HCT116 (cell line): ENCODE measurements at regions of chr2 and their contacts with region 1.

Region 1: GRCh38 chr2:112958428-112959108 is 19.2 kb upstream of the IL36G start:
- DNase-seq: peak; percentile 41
- ATAC-seq: peak; percentile 95
- H3K4me3 ChIP-seq: no peak overlapping the region
- H3K27ac ChIP-seq: no peak overlapping the region
- H3K4me1 ChIP-seq: peaks cover 0 to 13% of the 10 kb centered on the region in 2 experiments; a peak in 1 of 4 replicates
- H3K27me3 ChIP-seq: no peaks in the 10 kb centered on the region
- CTCF ChIP-seq: peak; percentile 62 to 92 (median 89); a peak in 5 of 6 replicates
- POLR2A ChIP-seq: no peak
- RAD21 ChIP-seq: peak; percentile 65

Region 2: GRCh38 chr2:112749755-112750559 is 208.6 kb before region 1 on chr2:
- CTCF ChIA-PET with region 1: interaction called, 7 read pairs
- POLR2A ChIA-PET with region 1: no interaction called
- RAD21 ChIA-PET with region 1: interaction called in 1 of 2 experiments, 4 read pairs
- intact Hi-C with region 1: loop called (anchors 2 kb)
- DNase-seq: no peak
- ATAC-seq: peak; percentile 94
- H3K4me3 ChIP-seq: no peak overlapping the region
- H3K27ac ChIP-seq: no peak overlapping the region
- H3K4me1 ChIP-seq: no peaks in the 10 kb centered on the region
- H3K27me3 ChIP-seq: no peaks in the 10 kb centered on the region
- CTCF ChIP-seq: peak; percentile 83 to 96 (median 92)
- POLR2A ChIP-seq: no peak
- RAD21 ChIP-seq: peak; percentile 81

Region 3: GRCh38 chr2:112947374-112947773 is 11.2 kb before region 1 on chr2:
- CTCF ChIA-PET with region 1: interaction called, 26 read pairs
- POLR2A ChIA-PET with region 1: no interaction called
- RAD21 ChIA-PET with region 1: no interaction called
- intact Hi-C with region 1: no loop called
- DNase-seq: no peak
- ATAC-seq: no peak
- H3K4me3 ChIP-seq: no peak overlapping the region
- H3K27ac ChIP-seq: no peak overlapping the region
- H3K4me1 ChIP-seq: 0 out of 4 replicates have a peak, but pooled peaks cover 0 to 2% of the 10 kb centered on the region in 2 experiments
- H3K27me3 ChIP-seq: no peaks in the 10 kb centered on the region
- CTCF ChIP-seq: no peak
- POLR2A ChIP-seq: no peak
- RAD21 ChIP-seq: no peak

Region 4: GRCh38 chr2:113407446-113408099 is 449.0 kb after region 1 on chr2:
- CTCF ChIA-PET with region 1: no interaction called
- POLR2A ChIA-PET with region 1: no interaction called
- RAD21 ChIA-PET with region 1: no interaction called
- intact Hi-C with region 1: loop called (anchors 10 kb)
- DNase-seq: peak; percentile 31
- ATAC-seq: peak; percentile 93
- H3K4me3 ChIP-seq: no peak overlapping the region
- H3K27ac ChIP-seq: no peak overlapping the region
- H3K4me1 ChIP-seq: 0 out of 4 replicates have a peak, but pooled peaks cover 0 to 2% of the 10 kb centered on the region in 2 experiments
- H3K27me3 ChIP-seq: 0 out of 2 replicates have a peak, but pooled peaks cover 8% of the 10 kb centered on the region
- CTCF ChIP-seq: peak; percentile 45 to 54 (median 45); a peak in 5 of 6 replicates
- POLR2A ChIP-seq: no peak
- RAD21 ChIP-seq: peak; percentile 54; the same call in 1 of the 2 replicates